HepG2 (cell line): ENCODE measurements at regions of chr9 and their contacts with region 1.

Region 1: DNA sequence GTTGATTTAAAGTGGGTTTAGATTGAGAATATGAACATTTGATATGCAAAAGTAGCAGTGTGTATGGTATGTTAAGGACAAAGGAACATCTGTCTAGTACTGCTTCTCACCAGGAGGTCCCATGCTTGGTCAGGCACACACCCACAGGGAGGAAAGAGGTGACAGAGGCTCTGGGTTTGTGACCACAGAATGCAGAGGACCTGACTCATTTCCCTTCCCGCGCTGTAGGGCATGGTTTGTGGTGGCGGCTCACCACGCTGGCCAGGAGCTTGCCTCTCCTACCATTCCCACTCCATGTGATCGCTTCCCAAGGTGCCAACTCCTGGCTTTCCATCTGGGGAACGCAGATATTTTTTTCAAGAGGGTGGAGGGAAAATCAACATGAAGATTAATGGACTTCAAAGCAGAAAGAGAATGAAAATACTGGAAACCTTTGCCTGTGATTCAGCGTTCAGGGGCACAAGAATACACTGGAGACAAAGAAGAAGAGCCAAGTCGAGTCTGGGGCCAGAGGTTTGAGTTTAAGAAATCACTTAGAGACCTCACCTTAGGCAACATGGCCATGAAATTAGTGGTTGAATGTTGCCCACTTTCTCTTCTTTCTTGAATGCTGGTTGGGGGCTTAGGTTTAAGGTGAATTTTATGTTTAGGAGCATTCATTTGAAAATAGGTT is 477.8 kb downstream of the CCDC171 start:
- DNase-seq: no peak
- ATAC-seq: no peak
- H3K4me3 ChIP-seq: no peak overlapping the region
- H3K27ac ChIP-seq: no peak overlapping the region
- H3K4me1 ChIP-seq: no peaks in the 10 kb centered on the region
- H3K27me3 ChIP-seq: no peaks in the 10 kb centered on the region
- CTCF ChIP-seq: no peak
- EP300 ChIP-seq: no peak
- POLR2A ChIP-seq: no peak
- RAD21 ChIP-seq: no peak

Region 2: DNA sequence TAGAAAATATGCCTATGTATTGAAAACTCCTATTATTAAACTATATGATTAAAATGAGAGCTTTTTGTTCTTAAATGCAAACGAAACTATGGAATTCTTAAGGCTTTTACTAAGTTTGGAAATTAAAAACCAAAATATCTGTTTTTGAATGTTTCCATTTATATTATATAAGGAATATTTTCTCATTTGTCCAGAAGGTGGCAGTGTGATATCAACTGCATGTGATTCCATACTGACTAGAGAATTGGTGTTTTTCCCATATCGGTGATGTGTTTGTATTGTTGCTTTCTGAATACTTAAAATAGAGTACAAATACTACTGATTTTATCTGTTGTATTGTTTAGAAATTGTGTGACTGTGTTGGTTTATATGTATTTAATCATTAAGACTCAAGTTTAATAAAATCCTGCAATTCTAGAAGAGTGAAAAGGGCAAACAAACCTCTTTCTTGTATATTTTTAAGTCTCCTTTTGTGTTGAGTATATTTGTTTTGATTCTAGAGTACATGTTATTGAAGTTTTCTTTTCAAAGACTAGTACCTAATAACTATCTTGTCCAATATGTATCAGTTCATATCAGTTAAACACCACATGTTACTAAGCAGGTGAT is 157.0 kb before region 1 on chr9:
- CTCF ChIA-PET with region 1: no interaction called
- POLR2A ChIA-PET with region 1: no interaction called
- in situ Hi-C with region 1: no loop called
- intact Hi-C with region 1: loop called (anchors 10 kb)
- DNase-seq: peak; percentile 33
- ATAC-seq: peak; percentile 59; the same call in 2 of the 3 replicates
- H3K4me3 ChIP-seq: no peak overlapping the region
- H3K27ac ChIP-seq: no peak overlapping the region
- H3K4me1 ChIP-seq: no peaks in the 10 kb centered on the region
- H3K27me3 ChIP-seq: no peaks in the 10 kb centered on the region
- CTCF ChIP-seq: peak; percentile 61
- EP300 ChIP-seq: no peak
- POLR2A ChIP-seq: no peak
- RAD21 ChIP-seq: no peak

Region 3: GRCh38 chr9:16145196-16145950 is 114.7 kb after region 1 on chr9:
- CTCF ChIA-PET with region 1: no interaction called
- POLR2A ChIA-PET with region 1: no interaction called
- in situ Hi-C with region 1: no loop called
- intact Hi-C with region 1: no loop called
- DNase-seq: no peak
- ATAC-seq: no peak
- H3K4me3 ChIP-seq: no peak overlapping the region
- H3K27ac ChIP-seq: no peak overlapping the region
- H3K4me1 ChIP-seq: no peaks in the 10 kb centered on the region
- H3K27me3 ChIP-seq: peaks cover 0 to 7% of the 10 kb centered on the region in 2 experiments; a peak in 2 of 5 replicates
- CTCF ChIP-seq: no peak
- EP300 ChIP-seq: no peak
- POLR2A ChIP-seq: no peak
- RAD21 ChIP-seq: no peak